GM12878 (cell line): ENCODE measurements at regions of chr2 and their contacts with region 1.

Region 1: DNA sequence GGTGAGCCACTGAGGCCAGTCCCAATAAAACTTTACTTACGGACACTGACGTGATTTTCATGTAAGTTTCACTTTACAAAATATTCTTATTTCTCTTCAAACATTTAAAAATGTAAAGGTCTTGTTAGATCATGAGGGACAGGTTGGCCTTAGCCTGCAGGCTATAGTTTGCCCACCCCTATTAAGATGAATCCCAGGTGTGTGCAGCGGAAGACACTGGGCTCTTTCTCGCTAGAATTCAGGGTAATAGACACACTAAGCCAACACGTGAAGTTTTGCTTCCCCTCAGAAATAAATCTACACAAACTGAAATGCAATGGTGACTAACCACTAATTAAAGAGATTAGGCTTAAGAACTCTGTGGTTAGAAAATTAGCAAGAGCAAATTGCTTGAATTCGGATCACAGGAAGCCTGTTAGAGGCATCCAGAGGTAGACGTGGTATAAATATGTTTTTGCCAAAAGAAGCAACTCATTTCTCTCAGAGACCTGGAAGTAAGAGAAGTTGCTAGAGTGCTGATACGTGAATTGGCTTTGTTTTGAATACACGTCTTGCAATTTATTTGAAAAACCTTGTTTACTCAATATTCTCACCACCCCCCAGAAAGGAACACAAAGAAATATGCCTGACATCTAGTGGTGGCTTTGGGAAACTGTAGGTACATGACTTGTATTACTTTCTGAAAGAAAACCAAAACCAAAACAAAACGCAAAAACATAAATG is 151.6 kb downstream of the DTNB start:
- DNase-seq: peak; percentile 90
- ATAC-seq: peak; percentile 94
- H3K4me3 ChIP-seq: no peak overlapping the region
- H3K27ac ChIP-seq: peak overlapping the region; percentile 67
- H3K4me1 ChIP-seq: peaks cover 6% of the 10 kb centered on the region; the same call in 1 of the 2 replicates
- H3K27me3 ChIP-seq: no peaks in the 10 kb centered on the region
- CTCF ChIP-seq: peak; percentile 75 to 86 (median 81)
- EP300 ChIP-seq: 0 out of 4 replicates have a peak, but pooled peaks of 1 of the 2 experiments have one; percentile 12
- POLR2A ChIP-seq: no peak
- RAD21 ChIP-seq: peak; percentile 99

Region 2: GRCh38 chr2:25342372-25343186 is 179.2 kb before region 1 on chr2:
- CTCF ChIA-PET with region 1: interaction called, 6 read pairs
- POLR2A ChIA-PET with region 1: interaction called, 3 read pairs
- RAD21 ChIA-PET with region 1: interaction called, 6 read pairs
- SMC1A ChIA-PET with region 1: interaction called, 3 read pairs
- in situ Hi-C with region 1: no loop called
- intact Hi-C with region 1: loop called (anchors 1 kb)
- DNase-seq: no peak
- ATAC-seq: peak; percentile 94
- H3K4me3 ChIP-seq: peak overlapping the region; percentile 76; the same call in 1 of the 2 replicates
- H3K27ac ChIP-seq: peak overlapping the region; percentile 52
- H3K4me1 ChIP-seq: peaks cover 12% of the 10 kb centered on the region
- H3K27me3 ChIP-seq: no peaks in the 10 kb centered on the region; a peak in 1 of 4 replicates
- CTCF ChIP-seq: peak; percentile 93 to 99 (median 97)
- EP300 ChIP-seq: no peak
- POLR2A ChIP-seq: peak; percentile 50; the same call in 1 of the 2 replicates
- RAD21 ChIP-seq: peak; percentile 90

Region 3: GRCh38 chr2:25367296-25367695 is 154.5 kb before region 1 on chr2:
- CTCF ChIA-PET with region 1: interaction called, 13 read pairs
- POLR2A ChIA-PET with region 1: interaction called, 10 read pairs
- RAD21 ChIA-PET with region 1: interaction called, 9 read pairs
- SMC1A ChIA-PET with region 1: interaction called, 5 read pairs
- in situ Hi-C with region 1: no loop called
- intact Hi-C with region 1: loop called (anchors 1 kb)
- DNase-seq: no peak
- ATAC-seq: no peak
- H3K4me3 ChIP-seq: no peak overlapping the region
- H3K27ac ChIP-seq: no peak overlapping the region
- H3K4me1 ChIP-seq: peaks cover 9% of the 10 kb centered on the region
- H3K27me3 ChIP-seq: no peaks in the 10 kb centered on the region
- CTCF ChIP-seq: no peak
- EP300 ChIP-seq: no peak
- POLR2A ChIP-seq: no peak
- RAD21 ChIP-seq: no peak

Region 4: GRCh38 chr2:25558262-25558661 is 36.4 kb after region 1 on chr2:
- CTCF ChIA-PET with region 1: interaction called, 8 read pairs
- POLR2A ChIA-PET with region 1: interaction called, 6 read pairs
- RAD21 ChIA-PET with region 1: interaction called, 14 read pairs
- SMC1A ChIA-PET with region 1: interaction called, 7 read pairs
- in situ Hi-C with region 1: no loop called
- intact Hi-C with region 1: loop called (anchors 5 kb)
- DNase-seq: peak; percentile 75
- ATAC-seq: peak; percentile 93
- H3K4me3 ChIP-seq: 0 out of 2 replicates have a peak overlapping the region, but pooled peaks have one; percentile 20
- H3K27ac ChIP-seq: peak overlapping the region; percentile 81
- H3K4me1 ChIP-seq: peaks cover 37% of the 10 kb centered on the region
- H3K27me3 ChIP-seq: no peaks in the 10 kb centered on the region
- CTCF ChIP-seq: no peak
- EP300 ChIP-seq: peak; percentile 80 to 86
- POLR2A ChIP-seq: no peak
- RAD21 ChIP-seq: peak; percentile 42; the same call in 1 of the 2 replicates

Region 5: GRCh38 chr2:25639171-25639570 is 117.3 kb after region 1 on chr2:
- CTCF ChIA-PET with region 1: no interaction called
- POLR2A ChIA-PET with region 1: no interaction called
- RAD21 ChIA-PET with region 1: no interaction called
- SMC1A ChIA-PET with region 1: no interaction called
- in situ Hi-C with region 1: no loop called
- intact Hi-C with region 1: no loop called
- DNase-seq: no peak
- ATAC-seq: no peak
- H3K4me3 ChIP-seq: no peak overlapping the region
- H3K27ac ChIP-seq: no peak overlapping the region
- H3K4me1 ChIP-seq: no peaks in the 10 kb centered on the region
- H3K27me3 ChIP-seq: no peaks in the 10 kb centered on the region
- CTCF ChIP-seq: no peak
- EP300 ChIP-seq: no peak
- POLR2A ChIP-seq: no peak
- RAD21 ChIP-seq: no peak